ENCODE measurements at regions of chr1 and their contacts with region 1.

Region 1: DNA sequence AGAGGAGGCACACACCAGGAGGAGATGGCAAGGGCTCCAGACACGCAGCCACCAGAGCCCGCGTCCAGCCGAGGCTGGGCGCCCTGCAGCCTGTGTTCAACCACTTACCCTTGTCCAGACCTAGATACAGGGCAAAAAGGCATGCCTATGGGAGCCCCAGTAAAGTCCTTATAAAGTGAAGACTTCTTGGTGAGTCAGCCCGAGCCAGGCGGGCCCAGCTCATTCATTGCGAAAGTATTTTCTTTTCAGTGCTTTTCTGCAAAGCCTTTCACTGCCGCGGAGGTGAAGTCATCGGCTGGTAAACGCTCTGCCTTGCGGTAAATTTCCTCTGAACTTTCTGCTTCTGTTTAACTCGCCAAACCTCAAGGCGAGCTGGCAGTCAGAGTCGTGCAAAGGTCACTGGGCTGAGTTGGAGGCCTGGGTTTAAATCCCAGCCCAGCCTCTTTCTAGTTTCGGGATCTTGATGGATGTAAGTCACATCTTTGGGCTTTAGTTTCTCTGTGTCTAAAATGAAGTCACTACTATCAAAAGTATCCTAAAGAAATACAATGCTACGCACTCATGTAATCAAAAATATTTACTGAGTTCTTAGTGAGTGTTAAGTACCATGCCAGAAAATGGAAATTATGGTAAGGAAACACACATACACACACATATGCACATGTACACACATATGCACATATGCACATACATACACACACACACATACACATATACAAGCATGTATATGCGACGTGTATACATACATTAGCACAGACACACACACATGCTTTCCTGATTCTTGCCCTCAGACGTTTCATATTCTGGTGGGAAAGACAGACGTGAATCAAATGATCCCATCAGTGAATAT is 54.7 kb upstream of the IFFO2 start:
- DNase-seq: peak; percentile 75
- H3K4me3 Mint-ChIP-seq: peak overlapping the region; percentile 59
- H3K27ac Mint-ChIP-seq: peak overlapping the region; percentile 64
- H3K4me1 Mint-ChIP-seq: peaks cover 33% of the 10 kb centered on the region
- H3K27me3 Mint-ChIP-seq: peaks cover 15% of the 10 kb centered on the region

Region 2: GRCh38 chr1:18511149-18511873 is 499.9 kb before region 1 on chr1:
- intact Hi-C with region 1: no loop called
- DNase-seq: no peak
- H3K4me3 Mint-ChIP-seq: no peak overlapping the region
- H3K27ac Mint-ChIP-seq: no peak overlapping the region
- H3K4me1 Mint-ChIP-seq: no peaks in the 10 kb centered on the region
- H3K27me3 Mint-ChIP-seq: no peaks in the 10 kb centered on the region

Region 3: GRCh38 chr1:18956369-18957135 is 54.7 kb before region 1 on chr1 and contains the start of gene IFFO2:
- intact Hi-C with region 1: loop called (anchors 1 kb)
- DNase-seq: peak; percentile 97
- H3K4me3 Mint-ChIP-seq: peak within 1 kb of the TSS; percentile 89
- H3K27ac Mint-ChIP-seq: peak within 1 kb of the TSS; percentile 78
- H3K4me1 Mint-ChIP-seq: peaks cover 50% of the 10 kb centered on the region
- H3K27me3 Mint-ChIP-seq: peaks cover 26% of the 10 kb centered on the region
- total RNA-seq, gene IFFO2: 31.8 and 32.6 TPM in 2 replicates

Region 4: GRCh38 chr1:18989176-18989809 is 21.9 kb before region 1 on chr1:
- intact Hi-C with region 1: no loop called
- DNase-seq: no peak
- H3K4me3 Mint-ChIP-seq: no peak overlapping the region
- H3K27ac Mint-ChIP-seq: no peak overlapping the region
- H3K4me1 Mint-ChIP-seq: no peaks in the 10 kb centered on the region
- H3K27me3 Mint-ChIP-seq: peaks cover 14% of the 10 kb centered on the region

Region 5: GRCh38 chr1:19074902-19075721 is 63.9 kb after region 1 on chr1:
- intact Hi-C with region 1: loop called (anchors 1 kb)
- DNase-seq: no peak
- H3K4me3 Mint-ChIP-seq: peak overlapping the region; percentile 53
- H3K27ac Mint-ChIP-seq: peak overlapping the region; percentile 61
- H3K4me1 Mint-ChIP-seq: peaks cover 34% of the 10 kb centered on the region
- H3K27me3 Mint-ChIP-seq: peaks cover 4% of the 10 kb centered on the region